ENCODE measurements at regions of chr1 and their contacts with region 1.

Region 1: GRCh38 chr1:10941891-10942541 is 70.4 kb upstream of the TARDBP start:
- DNase-seq: no peak
- H3K4me3 ChIP-seq: no peak overlapping the region
- H3K27ac ChIP-seq: no peak overlapping the region
- H3K4me1 ChIP-seq: peaks cover 0 to 30% (median 17%) of the 10 kb centered on the region in 4 donors
- H3K27me3 ChIP-seq: peaks cover 0 to 4% (median 0%) of the 10 kb centered on the region in 3 donors
- CTCF ChIP-seq: peak; percentile 53 to 93 (median 84)
- EP300 ChIP-seq: no peak
- POLR2A ChIP-seq: no peak

Region 2: DNA sequence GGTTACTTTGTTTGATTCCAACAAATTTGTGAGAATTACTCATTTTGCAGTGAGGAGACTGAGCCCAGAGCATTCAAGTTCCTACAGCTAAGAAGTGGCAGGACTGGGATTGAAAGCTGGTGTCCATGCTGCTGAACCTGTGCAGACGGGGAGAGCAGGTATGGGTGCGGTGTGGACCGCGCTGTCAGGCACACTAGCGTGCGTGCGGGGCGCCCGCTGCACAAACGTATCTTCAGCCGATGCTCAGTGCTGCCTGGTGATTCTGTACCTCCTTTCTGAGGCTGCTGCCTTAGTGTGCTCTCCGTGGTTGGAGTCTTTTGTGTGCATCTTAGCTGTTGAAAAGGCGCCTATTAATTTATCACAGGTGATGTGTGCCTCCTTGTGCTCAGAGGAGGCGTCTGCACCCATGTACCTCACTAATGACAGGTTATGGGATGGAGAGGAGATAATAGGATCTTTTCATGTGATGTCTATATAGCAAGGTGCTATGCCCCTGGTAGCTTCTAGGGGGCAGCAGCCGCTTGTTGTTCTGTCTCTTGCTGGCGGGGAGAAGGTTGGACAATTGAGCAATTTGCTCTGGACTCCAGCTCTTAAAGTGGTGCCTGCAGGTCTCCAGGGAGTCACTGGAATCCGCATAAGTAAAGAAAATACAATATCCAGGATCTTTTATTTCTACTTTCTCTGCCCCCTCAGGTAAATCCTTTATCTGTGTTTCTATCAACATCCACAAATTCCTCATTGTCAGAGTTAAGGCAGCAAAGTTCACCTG is 434.7 kb before region 1 on chr1:
- intact Hi-C with region 1: loop called (anchors 5 kb)
- DNase-seq: peak; percentile 86
- H3K4me3 ChIP-seq: no peak overlapping the region
- H3K27ac ChIP-seq: no peak overlapping the region
- H3K4me1 ChIP-seq: peaks cover 0 to 25% (median 22%) of the 10 kb centered on the region in 4 donors
- H3K27me3 ChIP-seq: no peaks in the 10 kb centered on the region
- CTCF ChIP-seq: peak; percentile 55 to 82 (median 73)
- EP300 ChIP-seq: no peak
- POLR2A ChIP-seq: no peak

Measured in sigmoid colon (tissue), 7 donors.